HepG2 (cell line): ENCODE measurements at regions of chr1 and their contacts with region 1.

Region 1: GRCh38 chr1:197180252-197180878 is 33.9 kb upstream of the ASPM start:
- DNase-seq: peak; percentile 47
- ATAC-seq: peak; percentile 88
- H3K4me3 ChIP-seq: no peak overlapping the region
- H3K27ac ChIP-seq: no peak overlapping the region
- H3K4me1 ChIP-seq: peaks cover 3% of the 10 kb centered on the region; the same call in 1 of the 2 replicates
- H3K27me3 ChIP-seq: no peaks in the 10 kb centered on the region
- CTCF ChIP-seq: peak; percentile 69
- EP300 ChIP-seq: no peak
- POLR2A ChIP-seq: no peak
- RAD21 ChIP-seq: peak; percentile 49; the same call in 1 of the 2 replicates

Region 2: GRCh38 chr1:197327776-197328364 is 147.5 kb after region 1 on chr1:
- CTCF ChIA-PET with region 1: no interaction called
- POLR2A ChIA-PET with region 1: no interaction called
- in situ Hi-C with region 1: no loop called
- intact Hi-C with region 1: loop called (anchors 2 kb)
- DNase-seq: no peak
- ATAC-seq: no peak
- H3K4me3 ChIP-seq: no peak overlapping the region
- H3K27ac ChIP-seq: no peak overlapping the region
- H3K4me1 ChIP-seq: no peaks in the 10 kb centered on the region
- H3K27me3 ChIP-seq: no peaks in the 10 kb centered on the region
- CTCF ChIP-seq: peak; percentile 32
- EP300 ChIP-seq: no peak
- POLR2A ChIP-seq: no peak
- RAD21 ChIP-seq: no peak

Region 3: DNA sequence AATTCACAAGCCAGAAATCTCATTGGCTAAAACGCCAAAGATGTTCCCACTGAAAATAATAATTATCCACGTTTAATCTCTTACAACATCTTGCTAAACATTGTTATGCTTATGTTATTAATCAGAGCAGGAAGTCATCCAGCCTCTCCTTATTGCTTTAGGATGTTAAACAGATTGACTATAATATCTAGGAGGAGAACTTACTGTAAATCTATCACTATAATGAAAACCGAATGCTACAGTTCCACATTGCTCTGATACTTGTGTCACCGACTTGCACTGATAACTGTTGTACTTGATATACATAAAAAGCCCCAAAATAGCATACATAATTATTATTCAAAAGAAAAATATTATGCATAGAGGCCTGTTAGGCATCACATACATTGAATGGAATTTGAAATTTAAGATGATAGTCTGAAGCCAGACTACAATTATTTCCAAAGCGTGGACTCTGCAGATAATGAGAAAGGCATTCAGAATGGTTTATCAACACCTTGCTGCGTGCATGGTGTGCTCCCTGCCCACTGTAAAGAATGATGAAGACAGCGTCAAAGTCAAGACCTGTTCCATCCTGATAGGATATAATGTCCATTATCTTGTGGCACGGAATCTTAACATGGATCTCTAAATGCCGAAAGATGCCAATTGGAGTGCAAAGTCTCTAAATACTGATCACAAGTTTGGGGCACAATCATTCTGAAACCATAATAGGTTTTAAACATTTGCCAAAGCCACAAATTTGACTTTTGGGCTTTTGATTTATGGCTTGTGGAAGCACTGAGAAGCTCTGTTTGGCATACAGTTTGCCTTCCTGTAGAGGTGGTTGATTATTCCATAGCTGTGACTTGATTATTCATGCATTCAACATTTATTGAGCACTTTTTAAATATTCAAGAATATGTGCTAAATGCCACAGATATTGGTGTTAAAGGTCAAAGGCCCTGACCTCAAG is 159.0 kb after region 1 on chr1:
- CTCF ChIA-PET with region 1: interaction called, 10 read pairs
- POLR2A ChIA-PET with region 1: no interaction called
- in situ Hi-C with region 1: loop called (anchors 5 kb)
- intact Hi-C with region 1: loop called (anchors 1 kb)
- DNase-seq: no peak
- ATAC-seq: no peak
- H3K4me3 ChIP-seq: no peak overlapping the region
- H3K27ac ChIP-seq: no peak overlapping the region
- H3K4me1 ChIP-seq: no peaks in the 10 kb centered on the region
- H3K27me3 ChIP-seq: no peaks in the 10 kb centered on the region; a peak in 1 of 5 replicates
- CTCF ChIP-seq: no peak
- EP300 ChIP-seq: no peak
- POLR2A ChIP-seq: no peak
- RAD21 ChIP-seq: no peak

Region 4: GRCh38 chr1:197356723-197357533 is 176.6 kb after region 1 on chr1:
- CTCF ChIA-PET with region 1: interaction called, 13 read pairs
- POLR2A ChIA-PET with region 1: no interaction called
- in situ Hi-C with region 1: no loop called
- intact Hi-C with region 1: loop called (anchors 1 kb)
- DNase-seq: peak; percentile 32
- ATAC-seq: peak; percentile 86
- H3K4me3 ChIP-seq: no peak overlapping the region
- H3K27ac ChIP-seq: no peak overlapping the region
- H3K4me1 ChIP-seq: no peaks in the 10 kb centered on the region
- H3K27me3 ChIP-seq: no peaks in the 10 kb centered on the region
- CTCF ChIP-seq: peak; percentile 76
- EP300 ChIP-seq: no peak
- POLR2A ChIP-seq: no peak
- RAD21 ChIP-seq: peak; percentile 40; the same call in 1 of the 2 replicates